Transverse colon (tissue), 4 donors: ENCODE measurements at regions of chr5 and their contacts with region 1.

Region 1: DNA sequence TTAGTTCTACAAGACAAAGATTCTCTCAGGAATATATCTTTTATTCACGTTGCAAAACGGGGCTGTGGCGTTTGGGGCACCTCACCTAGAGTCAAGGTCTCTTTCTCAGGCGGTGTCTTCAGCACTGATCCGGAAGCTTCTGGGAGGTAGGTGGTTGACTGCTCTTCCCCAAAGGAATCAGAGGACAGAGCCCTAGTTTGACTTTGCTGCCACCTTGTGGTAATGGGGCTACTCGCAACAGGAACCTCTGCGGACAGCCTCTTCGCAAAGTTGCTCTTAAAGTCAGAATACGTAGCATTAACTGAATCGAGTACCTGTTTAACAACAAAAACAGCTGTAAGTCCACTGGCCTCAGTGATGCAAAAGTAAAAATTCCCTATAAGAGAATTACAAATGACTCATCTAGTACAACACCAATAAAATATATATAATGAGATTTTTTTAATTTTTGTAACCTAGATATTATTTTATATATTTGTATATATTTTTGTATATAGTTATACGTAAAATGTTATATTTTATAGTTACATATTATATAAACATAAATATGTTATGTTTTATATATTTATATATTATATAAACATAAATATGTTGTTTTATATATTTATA is 13.3 kb upstream of the GPX8 start:
- DNase-seq: peak; percentile 83
- H3K4me3 ChIP-seq: no peak overlapping the region
- H3K27ac ChIP-seq: no peak overlapping the region
- H3K4me1 ChIP-seq: no peaks in the 10 kb centered on the region
- H3K27me3 ChIP-seq: peaks cover 15% of the 10 kb centered on the region
- CTCF ChIP-seq: peak; percentile 71 to 91 (median 87)
- EP300 ChIP-seq: no peak
- POLR2A ChIP-seq: no peak

Region 2: DNA sequence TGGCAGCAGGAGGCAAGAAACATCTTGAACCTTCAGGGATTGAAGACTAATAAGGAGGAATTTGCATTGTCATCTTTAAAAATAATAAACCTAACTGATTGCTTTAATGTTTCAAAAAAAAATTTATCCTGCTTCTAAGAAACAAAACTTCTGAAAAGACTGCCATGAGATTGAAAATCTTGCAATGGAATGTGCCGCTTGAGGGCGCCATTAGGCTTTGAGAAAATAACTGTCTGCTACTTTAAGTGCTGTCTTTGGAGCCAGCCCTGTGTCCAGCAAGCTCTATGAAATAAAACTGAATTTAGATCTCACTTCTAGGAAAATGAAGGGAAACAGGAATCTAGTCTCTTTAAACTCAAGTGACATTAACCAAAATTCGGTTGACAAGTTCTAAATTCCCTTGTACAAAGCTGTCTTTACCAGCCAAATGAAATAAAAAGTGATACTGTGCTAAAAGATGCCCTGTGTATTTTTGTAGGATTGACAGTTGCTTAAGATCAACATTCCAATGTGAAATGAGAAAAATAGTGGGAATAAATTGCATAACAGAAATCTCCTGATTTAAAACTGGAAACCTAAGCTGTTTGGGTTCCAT is 240.6 kb before region 1 on chr5:
- in situ Hi-C with region 1: loop called in 2 of 4 experiments (anchors 10 kb)
- intact Hi-C with region 1: loop called (anchors 10 kb)
- DNase-seq: peak; percentile 60
- H3K4me3 ChIP-seq: no peak overlapping the region
- H3K27ac ChIP-seq: no peak overlapping the region
- H3K4me1 ChIP-seq: no peaks in the 10 kb centered on the region
- H3K27me3 ChIP-seq: no peaks in the 10 kb centered on the region
- CTCF ChIP-seq: peak; percentile 27 to 56 (median 46)
- EP300 ChIP-seq: no peak
- POLR2A ChIP-seq: no peak

Region 3: GRCh38 chr5:54944364-54944763 is 202.3 kb before region 1 on chr5:
- in situ Hi-C with region 1: loop called in 2 of 4 experiments (anchors 25 kb)
- intact Hi-C with region 1: no loop called
- DNase-seq: no peak
- H3K4me3 ChIP-seq: no peak overlapping the region
- H3K27ac ChIP-seq: no peak overlapping the region
- H3K4me1 ChIP-seq: no peaks in the 10 kb centered on the region
- H3K27me3 ChIP-seq: no peaks in the 10 kb centered on the region
- CTCF ChIP-seq: peak; percentile 27 to 56 (median 39)
- EP300 ChIP-seq: no peak
- POLR2A ChIP-seq: no peak

Region 4: DNA sequence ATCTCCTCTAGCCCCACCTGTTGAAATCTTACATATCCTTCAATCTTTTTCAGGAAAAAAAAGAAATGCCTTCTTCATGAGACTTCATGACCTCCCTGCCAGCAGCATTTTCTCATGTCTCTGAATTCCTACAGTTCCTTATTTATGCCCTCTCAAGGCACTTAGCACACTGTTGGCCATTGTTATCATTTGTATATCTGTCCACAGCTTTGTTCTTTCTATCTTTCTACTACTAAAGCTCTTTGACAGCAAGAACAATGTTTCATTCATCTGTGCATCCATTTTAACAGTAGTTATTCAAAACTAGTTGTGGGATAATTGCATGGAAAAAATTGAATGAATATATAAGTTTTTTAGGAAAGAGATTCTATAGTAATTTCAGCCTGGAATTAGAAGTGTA is 65.1 kb before region 1 on chr5:
- in situ Hi-C with region 1: no loop called
- intact Hi-C with region 1: no loop called
- DNase-seq: no peak
- H3K4me3 ChIP-seq: no peak overlapping the region
- H3K27ac ChIP-seq: no peak overlapping the region
- H3K4me1 ChIP-seq: no peaks in the 10 kb centered on the region
- H3K27me3 ChIP-seq: no peaks in the 10 kb centered on the region
- CTCF ChIP-seq: no peak
- EP300 ChIP-seq: no peak
- POLR2A ChIP-seq: no peak